ENCODE measurements at regions of chr7 and their contacts with region 1.

Region 1: DNA sequence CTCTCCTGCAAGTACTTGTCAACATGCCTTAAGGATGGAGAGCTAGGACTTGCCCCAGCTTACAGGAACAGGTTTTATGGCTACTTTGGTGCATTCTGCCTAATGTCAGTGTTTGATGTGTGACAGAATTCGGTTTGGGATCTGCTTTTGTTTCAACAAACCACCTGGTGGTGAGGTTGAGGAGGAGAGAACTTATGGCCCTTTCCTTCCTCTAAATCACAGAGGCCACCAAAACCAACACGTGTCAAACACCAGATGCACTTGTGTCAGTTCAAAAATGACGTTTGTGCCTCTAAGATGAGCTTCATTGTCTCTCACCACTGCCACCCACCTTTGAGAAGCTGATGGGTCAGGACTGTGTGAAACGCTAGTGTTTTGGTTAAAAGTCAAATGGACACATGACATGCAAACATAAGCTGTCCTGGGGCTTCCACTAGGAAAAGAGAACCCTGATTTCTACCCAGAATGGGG is 83.9 kb downstream of the OSBPL3 start:
- DNase-seq: peak in 2 of 3 donors; percentile 60 to 68
- H3K4me3 ChIP-seq: peak overlapping the region in 1 of 7 experiments; percentile 12
- H3K27ac ChIP-seq: no peak overlapping the region
- H3K4me1 ChIP-seq: peaks cover 0 to 66% (median 39%) of the 10 kb centered on the region in 4 experiments
- H3K27me3 ChIP-seq: no peaks in the 10 kb centered on the region

Region 2: DNA sequence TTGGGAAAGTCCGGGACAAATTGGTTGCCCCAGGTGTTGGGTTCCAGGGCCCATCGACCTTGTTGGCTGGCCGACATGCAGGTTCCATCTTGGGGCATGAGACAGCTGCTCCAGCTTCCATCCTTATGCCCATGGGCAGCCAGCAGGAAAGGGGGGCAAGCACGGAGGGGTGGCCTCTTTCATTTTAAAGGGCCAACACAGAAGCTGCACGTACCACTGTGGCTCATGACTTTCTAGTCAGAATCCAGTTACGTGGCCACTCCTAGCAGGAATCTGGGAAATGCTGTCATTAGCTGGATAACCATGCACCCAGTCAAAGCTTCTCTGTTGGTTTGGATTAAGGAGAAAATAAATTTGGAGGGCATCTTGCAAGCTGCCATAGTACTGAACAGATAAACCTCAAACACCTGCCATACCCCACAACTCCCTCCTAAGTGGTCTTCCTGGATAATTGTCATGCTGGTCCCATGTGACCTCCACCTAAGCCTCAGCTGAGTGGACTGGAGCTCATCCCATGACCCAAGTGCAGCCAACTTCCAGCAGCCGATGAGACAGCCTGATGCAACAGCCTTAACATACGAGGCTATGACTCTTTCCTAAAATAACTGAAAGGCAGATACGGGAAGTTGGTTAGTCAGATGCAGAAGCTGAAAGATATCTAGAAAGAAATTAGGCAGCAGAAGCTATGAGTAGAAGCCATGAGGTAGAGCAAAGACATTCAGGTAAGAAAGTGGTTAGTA is 117.4 kb before region 1 on chr7:
- CTCF ChIA-PET with region 1: no interaction called
- POLR2A ChIA-PET with region 1: no interaction called
- DNase-seq: peak in 2 of 3 donors; percentile 22 to 48
- H3K4me3 ChIP-seq: no peak overlapping the region
- H3K27ac ChIP-seq: no peak overlapping the region
- H3K4me1 ChIP-seq: peaks cover 0 to 13% (median 1%) of the 10 kb centered on the region in 4 experiments
- H3K27me3 ChIP-seq: no peaks in the 10 kb centered on the region

Region 3: DNA sequence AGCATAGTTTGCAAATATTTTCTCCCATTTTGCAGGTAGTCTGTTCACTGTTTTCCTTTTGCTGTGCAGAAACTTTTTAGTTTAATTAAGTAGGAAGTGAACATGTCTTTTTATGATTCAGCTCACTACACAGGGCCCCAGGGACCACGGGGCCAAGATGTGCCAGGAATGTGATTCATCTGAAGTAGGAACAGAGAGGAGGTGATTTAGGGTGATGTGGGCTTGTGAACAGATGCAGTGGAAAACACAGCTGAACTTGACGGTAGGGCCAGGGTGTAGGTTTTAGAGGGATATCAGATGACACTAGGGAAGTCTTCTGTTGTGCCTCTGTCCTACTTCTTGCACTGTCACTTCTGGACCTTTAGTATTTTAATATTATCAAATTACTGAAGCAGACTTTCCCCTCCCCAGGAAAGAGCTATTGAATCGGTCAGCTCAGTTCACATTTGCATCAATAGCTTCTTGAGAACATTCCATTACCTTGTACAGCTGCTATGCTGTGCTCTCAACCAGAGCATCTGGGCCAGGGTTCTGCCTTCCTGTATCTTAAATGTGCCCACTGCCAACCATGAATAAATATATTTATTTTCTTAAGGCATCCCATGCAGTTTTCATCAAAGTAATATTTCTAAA is 13.0 kb before region 1 on chr7:
- CTCF ChIA-PET with region 1: interaction called, 13 read pairs
- POLR2A ChIA-PET with region 1: no interaction called
- DNase-seq: no peak
- H3K4me3 ChIP-seq: no peak overlapping the region
- H3K27ac ChIP-seq: no peak overlapping the region
- H3K4me1 ChIP-seq: peaks cover 3 to 30% (median 13%) of the 10 kb centered on the region in 4 experiments
- H3K27me3 ChIP-seq: no peaks in the 10 kb centered on the region